ENCODE measurements at regions of chr7 and their contacts with region 1.

Region 1: DNA sequence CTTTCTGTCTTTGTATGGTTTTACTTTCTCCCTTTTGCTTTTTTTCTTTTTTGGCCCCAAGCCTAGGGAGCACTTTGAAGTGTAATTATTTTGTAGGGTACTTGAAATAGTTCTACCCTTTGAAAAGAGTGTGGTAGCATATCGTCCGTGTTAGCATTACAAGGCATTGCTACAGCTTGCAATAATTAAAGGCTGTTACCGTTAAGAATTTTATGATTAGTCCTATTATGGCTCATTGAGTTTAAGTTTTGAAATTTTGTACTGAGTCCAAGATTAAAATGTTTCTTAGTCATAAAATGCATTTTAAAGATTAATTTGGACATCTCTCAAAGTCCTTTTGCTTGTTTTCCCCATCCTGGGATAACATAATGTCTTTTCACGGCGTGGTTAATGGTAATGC is 490.0 kb upstream of the LRRN3 start:
- DNase-seq: no peak
- ATAC-seq: no peak
- H3K4me3 ChIP-seq: no peak overlapping the region
- H3K27ac ChIP-seq: no peak overlapping the region
- H3K4me1 ChIP-seq: no peaks in the 10 kb centered on the region
- H3K27me3 ChIP-seq: no peaks in the 10 kb centered on the region
- CTCF ChIP-seq: no peak
- POLR2A ChIP-seq: no peak
- RAD21 ChIP-seq: no peak

Region 2: DNA sequence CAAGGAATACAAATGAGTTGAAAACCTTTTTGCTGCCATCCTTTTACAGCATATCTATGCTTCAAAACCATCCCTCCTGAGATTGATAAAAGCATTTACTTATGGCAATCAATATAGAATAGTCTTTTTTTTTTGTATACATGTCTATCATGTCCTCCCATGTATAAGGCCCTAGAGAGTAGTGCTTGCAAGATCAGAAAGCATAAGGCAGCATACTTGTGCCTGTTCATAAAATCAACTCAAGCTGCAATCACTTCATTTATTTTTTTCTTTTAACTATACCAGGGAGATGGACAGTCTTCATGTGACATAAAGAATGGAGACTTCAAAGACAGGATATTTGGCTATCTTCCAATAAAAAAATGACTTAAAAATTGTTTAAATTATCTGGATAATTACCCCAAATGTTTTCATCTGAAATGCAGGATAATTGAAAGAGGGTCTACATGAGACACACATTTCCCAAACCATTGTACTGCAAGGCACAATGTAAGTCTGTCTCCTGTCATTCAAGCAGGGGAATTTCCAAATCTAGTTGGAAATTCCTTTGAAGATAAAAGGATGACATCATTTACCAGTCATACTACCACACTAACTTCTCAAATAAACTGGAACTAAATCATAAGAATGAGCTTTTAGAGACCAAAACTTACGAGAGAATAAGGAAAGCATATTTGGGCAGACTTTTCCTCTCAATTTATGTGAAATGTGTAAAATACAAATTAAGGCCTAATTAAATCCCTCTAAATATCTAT is 512.5 kb after region 1 on chr7:
- CTCF ChIA-PET with region 1: no interaction called
- POLR2A ChIA-PET with region 1: no interaction called
- dilution Hi-C with region 1: no loop called
- in situ Hi-C with region 1: no loop called
- intact Hi-C with region 1: no loop called
- DNase-seq: peak; percentile 86
- ATAC-seq: peak; percentile 56; the same call in 1 of the 2 replicates
- H3K4me3 ChIP-seq: no peak overlapping the region
- H3K27ac ChIP-seq: no peak overlapping the region
- H3K4me1 ChIP-seq: no peaks in the 10 kb centered on the region; the same call in 1 of the 2 replicates
- H3K27me3 ChIP-seq: no peaks in the 10 kb centered on the region
- CTCF ChIP-seq: no peak
- POLR2A ChIP-seq: no peak
- RAD21 ChIP-seq: no peak

Region 3: DNA sequence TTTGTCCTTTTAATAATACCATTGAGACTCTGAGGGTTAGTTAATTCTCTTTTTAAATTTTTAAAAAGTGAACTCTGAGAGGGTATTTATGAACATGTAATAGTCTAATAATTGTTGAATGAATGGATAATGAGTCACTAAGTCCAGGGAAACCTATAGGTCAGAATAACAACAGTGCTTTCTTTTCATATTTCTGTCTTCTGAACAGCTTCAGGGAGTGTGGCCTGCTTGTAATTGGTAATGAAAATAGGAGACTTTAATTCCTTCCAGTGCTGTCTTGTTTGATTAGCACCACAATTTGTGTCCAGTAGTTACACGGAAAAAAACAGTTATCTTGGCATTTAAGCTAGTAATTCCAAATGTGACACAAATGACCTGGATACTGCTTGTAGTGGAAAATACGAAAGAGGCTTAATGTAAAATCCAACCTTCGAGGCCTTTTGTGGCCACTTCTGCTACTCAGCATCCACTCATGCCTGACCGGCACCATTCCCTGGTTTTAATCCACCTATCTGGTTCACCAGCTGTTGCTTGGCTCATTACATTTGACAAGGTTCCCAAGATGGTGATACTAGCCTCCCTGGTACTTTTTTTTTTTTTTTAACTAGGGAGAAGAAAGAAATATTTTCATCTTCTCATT is 1110.6 kb after region 1 on chr7:
- CTCF ChIA-PET with region 1: no interaction called
- POLR2A ChIA-PET with region 1: no interaction called
- dilution Hi-C with region 1: no loop called
- in situ Hi-C with region 1: loop called (anchors 25 kb)
- intact Hi-C with region 1: no loop called
- DNase-seq: no peak
- ATAC-seq: no peak
- H3K4me3 ChIP-seq: no peak overlapping the region
- H3K27ac ChIP-seq: no peak overlapping the region
- H3K4me1 ChIP-seq: no peaks in the 10 kb centered on the region
- H3K27me3 ChIP-seq: no peaks in the 10 kb centered on the region
- CTCF ChIP-seq: no peak
- POLR2A ChIP-seq: no peak
- RAD21 ChIP-seq: no peak